ENCODE measurements at regions of chr2 and their contacts with region 1.

Region 1: DNA sequence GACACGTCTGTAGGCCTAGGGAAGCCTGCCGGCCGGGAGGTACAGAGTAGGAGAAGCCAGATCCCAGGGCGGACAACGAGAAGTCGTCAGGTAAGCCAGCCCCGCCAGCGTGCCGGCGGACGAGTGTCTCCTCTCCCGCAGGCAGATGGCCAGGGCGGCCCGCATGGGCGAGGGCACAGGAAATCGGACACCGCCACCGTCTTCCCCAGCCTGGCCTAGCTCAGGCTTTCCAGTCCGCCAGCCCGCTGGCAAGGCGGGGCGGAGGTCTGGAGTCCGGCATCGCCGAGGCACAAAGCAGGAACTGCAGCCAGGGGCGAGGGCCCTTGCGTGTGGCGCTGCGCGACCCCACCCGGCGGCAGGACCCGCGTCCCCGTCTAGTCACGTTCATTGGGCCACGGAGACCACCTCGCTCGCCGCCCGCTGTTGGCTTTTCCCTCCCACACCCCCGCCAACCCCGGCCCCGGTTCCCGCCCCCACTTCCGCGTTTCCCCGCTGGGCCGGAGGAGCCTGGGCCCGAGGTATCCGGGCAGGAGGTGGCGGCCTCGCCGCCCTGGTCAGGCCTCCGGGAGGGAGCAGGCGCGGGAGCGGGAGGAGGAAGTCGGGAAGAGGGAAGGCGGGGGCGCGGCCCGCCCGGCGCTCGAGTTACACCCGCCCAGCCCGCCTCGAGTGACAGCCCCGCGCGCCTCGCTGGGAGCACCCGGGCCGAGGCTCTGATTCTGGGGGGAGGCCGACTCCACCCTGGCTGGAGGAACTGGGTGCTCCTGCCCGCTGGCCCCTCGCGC is at the start of gene GPD2:
- DNase-seq: peak; percentile 96 to 97 (median 97)
- ATAC-seq: peak; percentile 99
- H3K4me3 ChIP-seq: peak within 1 kb of the TSS; percentile 75
- H3K27ac ChIP-seq: peak within 1 kb of the TSS; percentile 88
- H3K4me1 ChIP-seq: peaks cover 2% of the 10 kb centered on the region
- H3K27me3 ChIP-seq: no peaks in the 10 kb centered on the region
- total RNA-seq, gene GPD2: 14.1 to 22.3 (median 16.9) TPM

Region 2: GRCh38 chr2:156490466-156490840 is 54.5 kb after region 1 on chr2:
- intact Hi-C with region 1: loop called in 1 of 4 experiments (anchors 10 kb)
- DNase-seq: no peak
- ATAC-seq: no peak
- H3K4me3 ChIP-seq: no peak overlapping the region
- H3K27ac ChIP-seq: no peak overlapping the region
- H3K4me1 ChIP-seq: no peaks in the 10 kb centered on the region
- H3K27me3 ChIP-seq: no peaks in the 10 kb centered on the region

Measured in right cardiac atrium (tissue), 5 donors.